B cell (primary cell): ENCODE measurements at regions of chr17 and their contacts with region 1.

Region 1: DNA sequence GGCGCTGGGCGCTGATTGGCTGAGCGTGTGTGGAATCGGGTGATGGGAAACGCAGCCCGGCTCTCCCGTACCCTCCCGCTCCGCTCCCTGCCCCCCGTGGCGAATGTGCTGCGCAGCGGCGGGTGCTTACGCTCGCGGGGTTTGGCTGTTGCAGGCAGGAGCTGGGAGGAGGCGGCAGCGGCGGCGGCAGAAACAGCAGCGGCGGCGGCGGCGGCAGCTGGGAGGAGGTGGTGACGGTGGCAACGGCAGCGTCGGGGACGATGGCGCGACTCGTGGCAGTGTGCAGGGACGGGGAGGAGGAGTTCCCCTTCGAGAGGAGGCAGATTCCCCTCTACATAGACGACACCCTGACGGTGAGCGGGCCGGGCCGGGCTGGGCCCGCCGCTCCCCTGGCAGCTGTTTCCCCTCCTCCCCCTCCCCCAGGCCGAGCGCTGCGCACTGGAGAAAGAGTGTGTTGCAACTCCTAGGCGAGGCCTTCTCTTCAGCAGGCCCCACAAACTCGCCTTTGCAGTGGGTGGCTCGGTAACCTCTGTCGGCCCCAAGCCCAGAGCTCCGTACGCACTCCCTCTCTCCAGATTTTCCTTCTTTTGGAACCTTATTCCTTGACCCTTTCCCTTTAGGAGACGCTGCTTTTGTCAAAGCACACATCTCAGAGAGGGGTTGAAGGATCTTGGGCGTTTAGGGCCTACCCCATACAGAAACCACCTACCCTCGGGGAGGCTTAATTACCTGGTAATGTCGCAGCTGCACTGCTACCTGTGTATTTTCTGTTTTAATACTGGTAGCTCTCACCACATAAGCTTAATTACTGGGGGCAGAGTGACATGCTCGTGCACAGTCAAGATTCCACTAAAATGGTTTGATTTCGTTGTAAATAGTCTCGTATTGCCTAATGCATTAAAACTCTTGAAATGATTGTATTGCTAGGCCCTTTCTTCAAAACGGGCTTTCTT is 1.0 kb downstream of the GGNBP2 start:
- DNase-seq: peak; percentile 97
- ATAC-seq: peak; percentile 71
- H3K4me3 ChIP-seq: peak overlapping the region; percentile 74 to 94 (median 92)
- H3K4me3 Mint-ChIP-seq: peak overlapping the region; percentile 96
- H3K27ac ChIP-seq: peak overlapping the region; percentile 96 to 100
- H3K27ac Mint-ChIP-seq: peak overlapping the region; percentile 98
- H3K4me1 ChIP-seq: peaks cover 43 to 46% of the 10 kb centered on the region in 2 donors
- H3K4me1 Mint-ChIP-seq: peaks cover 48% of the 10 kb centered on the region
- H3K27me3 ChIP-seq: no peaks in the 10 kb centered on the region
- H3K27me3 Mint-ChIP-seq: no peaks in the 10 kb centered on the region
- CTCF ChIP-seq: no peak

Region 2: GRCh38 chr17:35345926-35346771 is 1199.6 kb before region 1 on chr17:
- CTCF ChIA-PET with region 1: no interaction called
- POLR2A ChIA-PET with region 1: no interaction called
- intact Hi-C with region 1: loop called (anchors 10 kb)
- DNase-seq: peak; percentile 52
- ATAC-seq: peak; percentile 60
- H3K4me3 ChIP-seq: peak overlapping the region; percentile 50 to 80 (median 63)
- H3K4me3 Mint-ChIP-seq: peak overlapping the region; percentile 95
- H3K27ac ChIP-seq: peak overlapping the region; percentile 36 to 59
- H3K27ac Mint-ChIP-seq: peak overlapping the region; percentile 83
- H3K4me1 ChIP-seq: peaks cover 24 to 26% of the 10 kb centered on the region in 2 donors
- H3K4me1 Mint-ChIP-seq: peaks cover 39% of the 10 kb centered on the region
- H3K27me3 ChIP-seq: no peaks in the 10 kb centered on the region
- H3K27me3 Mint-ChIP-seq: no peaks in the 10 kb centered on the region
- CTCF ChIP-seq: no peak

Region 3: DNA sequence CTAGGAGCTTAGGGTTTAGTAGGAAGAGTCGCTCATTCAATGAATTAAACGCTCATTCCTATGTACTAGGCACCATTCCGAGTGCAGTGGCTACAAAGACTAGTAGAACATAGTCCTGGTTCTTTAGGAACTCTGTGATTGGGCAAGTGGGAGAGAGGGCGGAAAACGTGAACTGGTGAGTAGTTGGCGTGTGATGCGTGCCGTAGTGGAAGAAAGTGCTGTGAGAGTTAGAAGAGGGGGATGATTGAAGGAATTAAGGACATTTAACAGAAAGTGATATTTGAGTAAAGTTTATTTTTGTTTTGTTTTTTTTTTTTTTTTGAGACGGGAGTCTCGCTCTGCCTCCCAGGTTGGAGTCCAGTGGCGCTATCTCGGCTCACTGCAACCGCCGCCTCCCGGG is 977.2 kb before region 1 on chr17:
- CTCF ChIA-PET with region 1: no interaction called
- POLR2A ChIA-PET with region 1: no interaction called
- intact Hi-C with region 1: loop called (anchors 2 kb)
- DNase-seq: no peak
- ATAC-seq: no peak
- H3K4me3 ChIP-seq: peak overlapping the region; percentile 76 to 98 (median 91)
- H3K4me3 Mint-ChIP-seq: peak overlapping the region; percentile 99
- H3K27ac ChIP-seq: peak overlapping the region in 1 of 2 donors; percentile 84
- H3K27ac Mint-ChIP-seq: peak overlapping the region; percentile 95
- H3K4me1 ChIP-seq: peaks cover 14 to 16% of the 10 kb centered on the region in 2 donors
- H3K4me1 Mint-ChIP-seq: peaks cover 23% of the 10 kb centered on the region
- H3K27me3 ChIP-seq: no peaks in the 10 kb centered on the region
- H3K27me3 Mint-ChIP-seq: peaks cover 2% of the 10 kb centered on the region
- CTCF ChIP-seq: no peak

Region 4: DNA sequence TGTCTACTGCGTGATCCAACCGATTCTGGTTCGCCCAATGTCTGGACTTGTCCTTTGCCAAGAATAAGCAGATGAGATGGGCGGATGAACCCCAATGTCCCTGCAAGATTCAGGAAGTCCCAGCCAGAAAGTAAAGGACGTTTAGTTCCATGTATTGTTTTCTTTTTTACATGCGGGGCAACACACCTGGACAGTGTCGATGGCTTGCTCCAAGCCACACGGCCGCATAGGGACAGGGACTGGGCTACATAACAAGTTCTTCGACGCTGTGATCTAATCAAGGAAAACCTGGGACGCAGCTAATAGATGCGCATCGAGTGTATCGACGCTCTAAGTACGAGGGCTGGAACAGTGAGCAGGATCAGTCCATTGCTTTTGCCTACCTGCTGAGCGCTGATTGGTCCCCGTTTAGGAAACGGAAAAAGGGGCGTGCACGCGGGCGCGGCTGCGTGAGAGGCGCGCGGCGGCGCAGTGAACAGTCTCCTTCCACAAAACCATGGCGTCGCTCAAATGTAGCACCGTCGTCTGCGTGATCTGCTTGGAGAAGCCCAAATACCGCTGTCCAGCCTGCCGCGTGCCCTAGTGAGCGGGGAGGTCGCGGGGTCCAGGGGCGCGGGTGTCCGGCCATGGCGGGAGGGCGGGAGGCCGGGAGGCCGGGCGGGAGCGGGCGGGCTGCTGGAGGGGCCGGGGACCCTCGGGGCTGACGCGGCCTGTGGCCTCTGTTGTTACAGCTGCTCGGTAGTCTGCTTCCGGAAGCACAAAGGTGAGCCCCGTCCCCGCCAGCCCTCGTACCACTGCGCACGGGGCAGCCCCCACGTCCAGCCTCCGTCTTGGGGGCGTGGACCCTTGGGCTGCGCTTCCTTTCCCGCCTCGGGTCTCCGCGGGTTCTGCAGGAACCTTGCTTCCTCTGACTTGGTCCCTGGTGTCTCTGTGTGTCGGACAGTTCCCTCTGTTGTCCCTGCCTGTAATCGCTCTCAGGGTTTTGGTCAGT is 59.2 kb before region 1 on chr17 and contains the start of gene ZNHIT3:
- CTCF ChIA-PET with region 1: interaction called, 4 read pairs
- POLR2A ChIA-PET with region 1: interaction called, 3 read pairs
- intact Hi-C with region 1: loop called (anchors 1 kb)
- DNase-seq: peak; percentile 93
- ATAC-seq: peak; percentile 89
- H3K4me3 ChIP-seq: peak within 1 kb of the TSS; percentile 59 to 95 (median 86)
- H3K4me3 Mint-ChIP-seq: peak within 1 kb of the TSS; percentile 99
- H3K27ac ChIP-seq: peak within 1 kb of the TSS; percentile 56 to 83
- H3K27ac Mint-ChIP-seq: peak within 1 kb of the TSS; percentile 99
- H3K4me1 ChIP-seq: peaks cover 31 to 38% of the 10 kb centered on the region in 2 donors
- H3K4me1 Mint-ChIP-seq: peaks cover 44% of the 10 kb centered on the region
- H3K27me3 ChIP-seq: peaks cover 0 to 16% (median 13%) of the 10 kb centered on the region in 4 experiments
- H3K27me3 Mint-ChIP-seq: peaks cover 10% of the 10 kb centered on the region
- CTCF ChIP-seq: no peak
- total RNA-seq, gene ZNHIT3: 50.5 and 53.3 TPM in 2 replicates

Region 5: DNA sequence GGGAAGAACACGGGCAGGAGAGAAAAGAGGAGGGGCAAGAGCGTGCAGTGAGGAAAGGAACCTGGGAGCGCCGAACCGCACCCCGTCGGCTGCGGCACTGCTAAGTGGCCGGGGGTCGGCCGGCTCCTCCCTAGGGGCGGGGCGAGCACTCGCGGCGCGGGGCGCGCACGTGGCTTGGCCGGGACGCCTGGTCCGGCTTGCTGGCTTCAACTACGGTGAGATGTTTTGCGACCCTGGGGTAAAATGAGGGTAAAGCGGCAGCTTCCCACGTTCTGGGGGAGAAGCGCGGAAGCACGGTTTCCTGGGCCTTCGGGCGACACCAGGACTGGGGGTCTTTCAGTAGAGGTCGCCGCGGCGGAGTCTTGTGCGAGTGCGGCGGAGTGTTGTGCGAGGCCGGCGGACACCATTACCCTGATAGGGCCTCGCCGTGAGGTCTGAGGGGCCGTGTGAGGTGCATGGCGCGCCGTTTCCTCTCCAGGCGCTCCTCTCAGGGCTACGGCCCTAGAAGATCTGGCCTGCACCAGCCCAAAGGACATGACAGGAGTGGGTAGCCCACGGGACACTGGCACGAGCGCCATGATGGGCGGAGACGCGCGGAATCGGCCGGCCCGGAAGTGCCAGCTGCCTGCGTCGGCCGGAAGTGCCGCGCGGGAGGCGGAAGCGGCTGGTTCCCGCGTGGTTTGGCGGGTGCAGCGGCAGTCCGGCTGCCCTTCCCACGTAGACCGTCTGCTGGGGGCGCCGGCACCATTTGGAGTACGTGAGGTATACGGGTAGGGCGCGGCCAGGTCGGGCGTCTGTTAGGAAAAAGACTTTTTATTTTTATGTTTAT is 10.7 kb before region 1 on chr17 and contains the starts of genes MYO19 and PIGW:
- CTCF ChIA-PET with region 1: interaction called, 34 read pairs
- POLR2A ChIA-PET with region 1: interaction called, 57 read pairs
- intact Hi-C with region 1: loop called (anchors 1 kb)
- DNase-seq: peak; percentile 93
- ATAC-seq: peak; percentile 78
- H3K4me3 ChIP-seq: peak within 1 kb of the TSS; percentile 62 to 99 (median 94)
- H3K4me3 Mint-ChIP-seq: peak within 1 kb of the TSS; percentile 96
- H3K27ac ChIP-seq: peak within 1 kb of the TSS; percentile 96 to 97
- H3K27ac Mint-ChIP-seq: peak within 1 kb of the TSS; percentile 99
- H3K4me1 ChIP-seq: peaks cover 9 to 18% of the 10 kb centered on the region in 2 donors
- H3K4me1 Mint-ChIP-seq: peaks cover 21% of the 10 kb centered on the region
- H3K27me3 ChIP-seq: no peaks in the 10 kb centered on the region
- H3K27me3 Mint-ChIP-seq: no peaks in the 10 kb centered on the region
- CTCF ChIP-seq: no peak
- total RNA-seq, gene MYO19: 65.7 and 76.8 TPM in 2 replicates
- total RNA-seq, gene PIGW: 5.9 and 6.3 TPM in 2 replicates

Region 6: DNA sequence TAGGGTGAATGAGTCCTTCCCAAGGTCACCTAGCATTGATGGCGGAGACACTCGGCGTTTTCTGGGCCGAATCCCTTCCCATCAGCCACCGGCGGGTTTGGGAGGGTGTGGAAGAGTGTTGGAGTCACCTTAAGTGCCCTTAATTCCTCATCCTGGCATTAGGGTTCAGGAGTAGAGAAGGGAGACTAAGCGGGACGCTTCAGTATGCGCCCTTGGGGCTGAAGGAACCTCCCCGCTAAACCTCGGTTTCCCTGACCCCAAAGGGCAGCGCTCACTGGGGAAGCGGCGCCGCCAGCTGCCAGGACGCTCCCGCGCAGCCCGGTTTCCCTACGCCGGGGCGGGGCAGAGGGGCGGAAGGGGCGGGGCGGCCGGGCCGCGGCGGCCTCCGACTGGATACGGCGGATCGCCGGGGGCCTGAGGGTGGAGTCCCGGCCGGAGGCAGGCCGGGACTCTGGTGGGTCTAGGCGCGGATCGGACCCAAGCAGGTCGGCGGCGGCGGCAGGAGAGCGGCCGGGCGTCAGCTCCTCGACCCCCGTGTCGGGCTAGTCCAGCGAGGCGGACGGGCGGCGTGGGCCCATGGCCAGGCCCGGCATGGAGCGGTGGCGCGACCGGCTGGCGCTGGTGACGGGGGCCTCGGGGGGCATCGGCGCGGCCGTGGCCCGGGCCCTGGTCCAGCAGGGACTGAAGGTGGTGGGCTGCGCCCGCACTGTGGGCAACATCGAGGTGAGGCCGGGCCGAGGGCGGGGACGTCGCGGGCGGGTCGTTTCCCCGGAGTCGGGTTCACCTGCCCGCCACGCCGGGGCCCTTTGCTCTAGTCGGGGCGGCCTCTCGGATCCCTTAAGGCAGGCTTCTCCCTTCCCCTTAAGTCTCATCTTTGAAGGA is 45.9 kb after region 1 on chr17 and contains the start of gene DHRS11:
- CTCF ChIA-PET with region 1: no interaction called
- POLR2A ChIA-PET with region 1: no interaction called
- intact Hi-C with region 1: loop called (anchors 1 kb)
- DNase-seq: peak; percentile 79
- ATAC-seq: peak; percentile 98
- H3K4me3 ChIP-seq: peak within 1 kb of the TSS in 4 of 5 experiments; percentile 41 to 67 (median 61)
- H3K4me3 Mint-ChIP-seq: peak within 1 kb of the TSS; percentile 75
- H3K27ac ChIP-seq: peak within 1 kb of the TSS; percentile 14 to 70
- H3K27ac Mint-ChIP-seq: peak within 1 kb of the TSS; percentile 61
- H3K4me1 ChIP-seq: peaks cover 11 to 13% of the 10 kb centered on the region in 2 donors
- H3K4me1 Mint-ChIP-seq: peaks cover 20% of the 10 kb centered on the region
- H3K27me3 ChIP-seq: peaks cover 0 to 10% (median 0%) of the 10 kb centered on the region in 4 experiments
- H3K27me3 Mint-ChIP-seq: no peaks in the 10 kb centered on the region
- CTCF ChIP-seq: no peak
- total RNA-seq, gene DHRS11: 7.3 and 8.2 TPM in 2 replicates

Region 7: DNA sequence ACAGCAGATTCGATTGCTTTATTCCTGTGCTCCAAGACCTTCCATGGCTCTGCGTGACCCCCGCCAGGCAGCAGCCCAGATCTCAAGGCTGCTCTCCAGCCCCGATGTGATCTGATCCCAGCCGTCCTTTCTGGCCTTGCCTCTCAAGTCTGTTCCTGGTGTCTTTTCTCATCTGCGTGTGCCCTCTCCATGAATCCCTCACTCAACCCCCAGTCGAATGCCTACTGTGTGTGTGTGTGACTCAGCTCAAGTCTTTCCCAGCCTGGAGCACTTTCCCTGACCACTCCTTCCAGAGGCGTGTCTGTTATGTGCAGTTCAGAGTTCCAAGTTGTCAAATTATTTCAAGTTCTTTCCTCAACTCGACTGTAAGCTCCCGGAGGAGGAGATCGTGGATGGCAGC is 119.7 kb after region 1 on chr17:
- CTCF ChIA-PET with region 1: no interaction called
- POLR2A ChIA-PET with region 1: no interaction called
- intact Hi-C with region 1: no loop called
- DNase-seq: no peak
- ATAC-seq: no peak
- H3K4me3 ChIP-seq: no peak overlapping the region
- H3K4me3 Mint-ChIP-seq: no peak overlapping the region
- H3K27ac ChIP-seq: no peak overlapping the region
- H3K27ac Mint-ChIP-seq: no peak overlapping the region
- H3K4me1 ChIP-seq: no peaks in the 10 kb centered on the region
- H3K4me1 Mint-ChIP-seq: no peaks in the 10 kb centered on the region
- H3K27me3 ChIP-seq: peaks cover 0 to 4% (median 0%) of the 10 kb centered on the region in 4 experiments
- H3K27me3 Mint-ChIP-seq: peaks cover 48% of the 10 kb centered on the region
- CTCF ChIP-seq: no peak

Region 8: DNA sequence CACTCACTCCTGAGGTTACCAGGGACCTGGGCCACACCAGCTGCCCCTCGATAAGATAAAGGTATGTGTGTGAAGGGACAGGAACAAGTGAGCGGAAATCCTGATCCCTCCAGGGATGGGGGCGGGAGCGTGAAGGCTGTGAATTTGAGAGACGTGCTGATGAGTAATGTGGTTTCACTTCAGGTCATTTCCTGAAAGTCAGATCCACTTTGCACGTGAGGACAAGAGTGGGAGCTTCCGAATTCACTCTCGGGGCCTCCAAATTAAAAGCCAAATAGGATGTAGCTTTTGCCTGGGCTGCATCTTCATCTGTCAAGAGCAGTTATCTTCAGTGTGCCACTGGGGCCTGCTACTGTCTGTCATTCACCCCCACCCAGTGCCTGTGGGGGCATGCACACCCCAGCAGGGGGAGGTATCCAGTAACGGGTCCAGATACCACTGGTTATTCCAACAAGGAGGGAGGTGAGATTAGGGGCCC is 304.2 kb after region 1 on chr17:
- CTCF ChIA-PET with region 1: no interaction called
- POLR2A ChIA-PET with region 1: no interaction called
- intact Hi-C with region 1: no loop called
- DNase-seq: no peak
- ATAC-seq: no peak
- H3K4me3 ChIP-seq: no peak overlapping the region
- H3K4me3 Mint-ChIP-seq: no peak overlapping the region
- H3K27ac ChIP-seq: no peak overlapping the region
- H3K27ac Mint-ChIP-seq: no peak overlapping the region
- H3K4me1 ChIP-seq: no peaks in the 10 kb centered on the region
- H3K4me1 Mint-ChIP-seq: no peaks in the 10 kb centered on the region
- H3K27me3 ChIP-seq: peaks cover 0 to 16% (median 0%) of the 10 kb centered on the region in 4 experiments
- H3K27me3 Mint-ChIP-seq: peaks cover 22% of the 10 kb centered on the region
- CTCF ChIP-seq: no peak

Region 9: GRCh38 chr17:37358830-37359681 is 813.3 kb after region 1 on chr17:
- CTCF ChIA-PET with region 1: no interaction called
- POLR2A ChIA-PET with region 1: no interaction called
- intact Hi-C with region 1: loop called (anchors 5 kb)
- DNase-seq: peak; percentile 95
- ATAC-seq: peak; percentile 95
- H3K4me3 ChIP-seq: peak overlapping the region; percentile 18 to 88 (median 83)
- H3K4me3 Mint-ChIP-seq: peak overlapping the region; percentile 92
- H3K27ac ChIP-seq: peak overlapping the region; percentile 60 to 63
- H3K27ac Mint-ChIP-seq: peak overlapping the region; percentile 80
- H3K4me1 ChIP-seq: peaks cover 12 to 18% of the 10 kb centered on the region in 2 donors
- H3K4me1 Mint-ChIP-seq: peaks cover 14% of the 10 kb centered on the region
- H3K27me3 ChIP-seq: no peaks in the 10 kb centered on the region
- H3K27me3 Mint-ChIP-seq: no peaks in the 10 kb centered on the region
- CTCF ChIP-seq: peak; percentile 47